Esophagus squamous epithelium (tissue), 5 donors: ENCODE measurements at regions of chr10 and their contacts with region 1.

Region 1: DNA sequence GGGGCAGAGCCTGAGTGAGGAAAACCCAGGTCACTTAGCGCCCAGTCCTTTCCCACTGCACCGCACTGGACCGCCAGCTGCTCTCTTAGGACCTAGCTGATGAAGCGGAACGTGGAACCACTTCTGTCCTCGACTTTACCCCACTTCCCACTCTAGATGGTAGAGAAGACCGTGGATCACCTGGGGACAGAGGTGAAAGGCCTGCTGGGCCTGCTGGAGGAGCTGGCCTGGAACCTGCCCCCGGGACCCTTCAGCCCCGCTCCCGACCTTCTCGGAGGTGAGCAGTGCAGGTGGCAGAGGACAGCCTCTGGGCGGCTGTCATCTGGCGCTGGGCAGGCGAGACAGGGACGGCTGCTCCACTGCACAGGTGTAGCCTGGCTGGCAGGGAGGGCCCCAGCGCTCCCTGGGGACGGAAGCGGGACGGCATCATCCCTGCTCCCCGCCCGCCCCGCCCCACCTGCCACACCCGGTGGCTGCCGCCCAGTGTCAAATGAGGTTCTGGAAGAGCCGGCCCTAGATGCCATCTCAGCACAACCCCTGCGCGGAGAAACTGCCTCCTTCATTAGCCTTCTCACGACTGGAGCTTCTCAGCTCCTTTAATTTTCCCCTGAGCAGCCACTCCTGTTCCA is 11.7 kb downstream of the PLAC9 start:
- DNase-seq: no peak
- H3K4me3 ChIP-seq: peak overlapping the region in 3 of 4 donors; percentile 10 to 44 (median 15)
- H3K27ac ChIP-seq: peak overlapping the region; percentile 46 to 62 (median 58)
- H3K4me1 ChIP-seq: peaks cover 10 to 28% (median 15%) of the 10 kb centered on the region in 3 donors
- H3K27me3 ChIP-seq: peaks cover 0 to 22% (median 0%) of the 10 kb centered on the region in 4 donors
- CTCF ChIP-seq: peak in 1 of 6 experiments; percentile 8
- POLR2A ChIP-seq: no peak

Region 2: DNA sequence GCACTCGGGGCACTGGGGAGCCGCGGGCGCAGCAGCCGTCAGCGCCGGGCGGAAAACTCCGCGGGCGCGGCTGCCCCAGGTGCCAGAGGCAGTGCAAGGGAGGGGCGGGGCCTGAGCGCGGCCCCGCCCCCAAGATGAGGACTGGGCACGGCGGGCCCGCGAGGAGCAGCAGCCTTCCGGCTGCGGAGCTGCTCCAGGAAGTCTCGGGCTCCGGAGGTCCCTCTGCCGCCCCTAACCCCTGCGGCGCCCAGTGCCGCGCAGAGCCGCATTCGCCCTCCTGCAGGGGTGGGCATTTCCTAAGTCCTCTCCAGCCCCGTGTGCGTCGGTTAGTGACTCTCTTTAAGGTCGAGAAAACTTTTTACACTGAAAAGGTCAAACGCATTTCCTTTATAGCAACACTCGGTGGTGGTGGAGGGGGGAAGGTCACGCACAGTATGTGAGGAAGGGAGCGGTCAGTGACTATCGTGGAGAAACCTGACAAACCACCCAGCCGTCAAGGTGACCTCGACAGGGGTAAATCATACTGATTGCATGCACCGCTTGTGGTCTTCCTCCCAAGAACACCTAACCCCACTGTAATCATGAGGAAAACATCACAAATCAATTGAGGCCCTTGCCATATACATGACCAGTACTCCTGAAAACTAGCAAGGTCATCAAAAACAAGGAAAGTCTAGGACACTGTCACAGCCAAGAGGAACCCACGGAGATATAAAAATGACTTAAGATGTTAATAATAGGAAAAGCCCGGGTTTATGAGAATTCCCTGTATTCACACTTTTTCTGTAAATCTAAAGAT is 61.5 kb after region 1 on chr10 and contains the start of gene ANXA11:
- intact Hi-C with region 1: loop called (anchors 5 kb)
- DNase-seq: no peak
- H3K4me3 ChIP-seq: peak within 1 kb of the TSS; percentile 66 to 95 (median 89)
- H3K27ac ChIP-seq: peak within 1 kb of the TSS; percentile 98 to 100 (median 100)
- H3K4me1 ChIP-seq: peaks cover 38 to 78% (median 43%) of the 10 kb centered on the region in 3 donors
- H3K27me3 ChIP-seq: no peaks in the 10 kb centered on the region
- CTCF ChIP-seq: peak in 1 of 6 experiments; percentile 7
- POLR2A ChIP-seq: peak in 3 of 4 donors; percentile 10 to 97 (median 97)
- total RNA-seq, gene ANXA11: 131 to 243 (median 163) TPM